ENCODE measurements at regions of chr16 and their contacts with region 1.

Region 1: DNA sequence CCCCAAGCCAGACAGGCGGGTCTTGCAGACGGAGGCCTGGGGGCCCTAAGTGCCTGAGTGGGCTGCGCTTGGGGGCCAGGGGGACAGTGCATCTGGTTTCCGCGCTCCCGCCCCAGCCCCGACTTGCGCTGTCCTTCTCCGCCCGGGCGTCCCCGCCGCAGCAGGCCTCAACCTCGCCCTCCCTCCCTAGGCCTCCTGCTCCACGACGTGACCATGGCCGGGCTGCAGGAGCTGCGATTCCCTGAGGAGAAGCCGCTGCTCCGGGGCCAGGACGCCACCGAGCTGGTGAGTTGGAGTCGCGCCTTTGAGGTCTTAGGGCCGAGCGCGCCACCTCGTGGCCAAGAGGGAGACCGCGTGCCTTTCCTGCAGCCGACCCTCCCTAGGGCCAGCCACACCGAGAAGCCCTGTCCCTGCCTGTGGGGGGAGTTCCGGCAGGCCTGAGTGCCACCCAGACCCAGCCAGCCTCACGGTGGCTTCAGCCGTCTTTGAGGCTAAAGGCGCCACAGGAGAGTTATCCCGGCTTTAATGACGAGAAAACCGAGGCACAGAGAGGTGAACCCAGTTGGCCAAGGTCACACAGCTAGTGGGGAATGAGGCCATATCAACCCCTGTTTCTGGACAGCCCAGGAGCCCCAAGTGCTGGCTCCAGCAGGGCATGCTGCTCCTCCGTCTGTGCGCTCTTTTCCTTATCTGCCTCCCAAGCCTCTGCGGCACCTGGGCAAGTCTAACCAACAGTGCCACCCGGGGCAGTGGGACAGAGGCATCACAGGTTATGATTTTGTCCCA is 12.2 kb upstream of the NDRG4 start:
- DNase-seq: peak; percentile 74
- H3K4me3 Mint-ChIP-seq: no peak overlapping the region
- H3K27ac Mint-ChIP-seq: no peak overlapping the region
- H3K4me1 Mint-ChIP-seq: no peaks in the 10 kb centered on the region
- H3K27me3 Mint-ChIP-seq: peaks cover 3% of the 10 kb centered on the region

Region 2: GRCh38 chr16:58299757-58300349 is 187.9 kb before region 1 on chr16:
- CTCF ChIA-PET with region 1: interaction called, 11 read pairs
- POLR2A ChIA-PET with region 1: no interaction called
- DNase-seq: peak; percentile 42
- H3K4me3 Mint-ChIP-seq: no peak overlapping the region
- H3K27ac Mint-ChIP-seq: no peak overlapping the region
- H3K4me1 Mint-ChIP-seq: no peaks in the 10 kb centered on the region
- H3K27me3 Mint-ChIP-seq: peaks cover 21% of the 10 kb centered on the region

Region 3: GRCh38 chr16:58329147-58329546 is 158.6 kb before region 1 on chr16:
- CTCF ChIA-PET with region 1: interaction called, 213 read pairs
- POLR2A ChIA-PET with region 1: no interaction called
- DNase-seq: no peak
- H3K4me3 Mint-ChIP-seq: no peak overlapping the region
- H3K27ac Mint-ChIP-seq: no peak overlapping the region
- H3K4me1 Mint-ChIP-seq: no peaks in the 10 kb centered on the region
- H3K27me3 Mint-ChIP-seq: peaks cover 32% of the 10 kb centered on the region

Region 4: DNA sequence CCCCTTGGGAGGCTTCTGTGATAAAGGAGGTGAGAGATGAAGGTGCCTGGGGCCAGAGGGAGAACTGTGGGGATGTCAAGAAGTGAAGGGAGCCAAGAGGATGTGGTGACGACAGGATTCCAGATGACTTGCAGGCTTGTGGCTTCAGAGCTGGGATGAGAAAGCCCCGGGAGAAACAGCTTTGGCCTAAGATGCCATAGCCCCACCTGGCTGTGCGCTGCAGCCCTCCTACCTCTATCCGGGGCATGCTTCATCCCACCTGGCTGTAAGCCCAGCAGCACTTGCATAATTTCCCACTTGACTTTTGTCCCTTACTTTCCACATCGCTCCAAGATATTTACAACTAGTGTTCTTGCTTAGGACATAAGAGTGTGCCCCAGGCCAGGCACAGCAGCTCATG is 66.2 kb before region 1 on chr16:
- CTCF ChIA-PET with region 1: no interaction called
- POLR2A ChIA-PET with region 1: no interaction called
- DNase-seq: no peak
- H3K4me3 Mint-ChIP-seq: no peak overlapping the region
- H3K27ac Mint-ChIP-seq: no peak overlapping the region
- H3K4me1 Mint-ChIP-seq: peaks cover 16% of the 10 kb centered on the region
- H3K27me3 Mint-ChIP-seq: peaks cover 12% of the 10 kb centered on the region

Region 5: GRCh38 chr16:58578642-58579041 is 90.9 kb after region 1 on chr16:
- CTCF ChIA-PET with region 1: no interaction called
- POLR2A ChIA-PET with region 1: no interaction called
- DNase-seq: no peak
- H3K4me3 Mint-ChIP-seq: no peak overlapping the region
- H3K27ac Mint-ChIP-seq: no peak overlapping the region
- H3K4me1 Mint-ChIP-seq: no peaks in the 10 kb centered on the region
- H3K27me3 Mint-ChIP-seq: no peaks in the 10 kb centered on the region